SK-N-SH (cell line): ENCODE measurements at regions of chr16 and their contacts with region 1.

Region 1: DNA sequence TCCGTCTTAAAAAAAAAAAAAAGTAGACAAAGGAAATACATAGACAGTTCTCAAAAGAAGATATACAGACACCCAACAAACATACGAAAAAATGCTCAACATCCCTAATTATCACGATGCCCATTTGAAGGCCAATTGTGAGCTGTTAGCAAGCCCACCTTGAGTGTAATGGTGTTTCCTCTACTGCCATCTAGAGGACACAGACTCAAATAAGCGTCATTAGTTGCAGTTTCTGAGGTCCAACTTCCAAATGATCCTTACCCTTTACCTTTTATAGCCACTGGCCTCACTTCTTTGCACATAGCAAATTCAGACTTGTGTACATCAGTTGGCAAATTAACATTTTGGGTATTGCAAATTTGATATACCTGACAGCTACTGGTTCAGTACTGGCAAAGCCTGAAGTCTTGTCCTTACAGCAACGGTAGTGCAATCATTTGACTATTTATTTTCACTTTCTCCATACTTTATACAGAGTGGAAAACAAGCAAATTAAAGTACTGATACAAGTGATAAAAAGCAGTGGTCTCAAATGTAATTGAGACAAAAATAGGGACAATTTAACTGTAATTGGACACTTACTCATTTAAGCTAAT is 536.3 kb upstream of the EEF2KMT start:
- DNase-seq: peak; percentile 54
- H3K4me3 ChIP-seq: no peak overlapping the region
- H3K27ac ChIP-seq: peak overlapping the region in 1 of 2 experiments; percentile 9; a peak in 1 of 4 replicates
- H3K4me1 ChIP-seq: peaks cover 0 to 7% of the 10 kb centered on the region in 2 experiments; a peak in 2 of 4 replicates
- H3K27me3 ChIP-seq: no peaks in the 10 kb centered on the region
- CTCF ChIP-seq: peak; percentile 49
- EP300 ChIP-seq: no peak
- RAD21 ChIP-seq: peak; percentile 70

Region 2: GRCh38 chr16:5502467-5502869 is 131.5 kb before region 1 on chr16:
- CTCF ChIA-PET with region 1: interaction called, 20 read pairs
- POLR2A ChIA-PET with region 1: interaction called, 4 read pairs
- DNase-seq: peak; percentile 76
- H3K4me3 ChIP-seq: no peak overlapping the region
- H3K27ac ChIP-seq: peak overlapping the region in 1 of 2 experiments; percentile 100; a peak in 2 of 4 replicates
- H3K4me1 ChIP-seq: peaks cover 0 to 62% of the 10 kb centered on the region in 2 experiments; a peak in 2 of 4 replicates
- H3K27me3 ChIP-seq: no peaks in the 10 kb centered on the region
- CTCF ChIP-seq: 0 out of 2 replicates have a peak, but pooled peaks have one; percentile 8
- EP300 ChIP-seq: peak in 1 of 2 experiments; percentile 100; a peak in 2 of 4 replicates
- RAD21 ChIP-seq: peak; percentile 95

Region 3: DNA sequence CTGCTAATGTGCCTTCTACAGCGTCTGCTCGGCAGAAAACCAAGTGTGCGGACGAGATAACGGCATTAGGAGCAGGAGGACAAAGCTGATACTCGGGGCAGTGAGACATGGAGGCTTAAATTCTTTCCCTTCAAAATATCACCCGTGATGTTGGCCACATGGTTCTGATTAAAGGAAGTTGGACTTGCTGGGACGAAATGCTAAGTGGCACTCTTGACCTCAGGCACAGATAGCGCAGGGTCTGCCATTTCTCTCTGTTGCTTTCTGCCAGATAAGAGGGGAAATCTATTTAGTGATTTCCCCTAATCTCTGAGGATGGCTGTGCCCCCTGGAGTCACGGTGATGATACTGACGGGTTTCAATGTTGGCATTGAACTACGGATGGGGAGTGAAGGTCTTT is 26.8 kb before region 1 on chr16:
- CTCF ChIA-PET with region 1: interaction called, 20 read pairs
- POLR2A ChIA-PET with region 1: no interaction called
- DNase-seq: peak; percentile 68
- H3K4me3 ChIP-seq: no peak overlapping the region
- H3K27ac ChIP-seq: peak overlapping the region in 1 of 2 experiments; percentile 99; a peak in 3 of 4 replicates
- H3K4me1 ChIP-seq: peaks cover 0 to 56% of the 10 kb centered on the region in 2 experiments; a peak in 2 of 4 replicates
- H3K27me3 ChIP-seq: no peaks in the 10 kb centered on the region
- CTCF ChIP-seq: no peak
- EP300 ChIP-seq: peak in 1 of 2 experiments; percentile 98; a peak in 2 of 4 replicates
- RAD21 ChIP-seq: peak; percentile 54

Region 4: DNA sequence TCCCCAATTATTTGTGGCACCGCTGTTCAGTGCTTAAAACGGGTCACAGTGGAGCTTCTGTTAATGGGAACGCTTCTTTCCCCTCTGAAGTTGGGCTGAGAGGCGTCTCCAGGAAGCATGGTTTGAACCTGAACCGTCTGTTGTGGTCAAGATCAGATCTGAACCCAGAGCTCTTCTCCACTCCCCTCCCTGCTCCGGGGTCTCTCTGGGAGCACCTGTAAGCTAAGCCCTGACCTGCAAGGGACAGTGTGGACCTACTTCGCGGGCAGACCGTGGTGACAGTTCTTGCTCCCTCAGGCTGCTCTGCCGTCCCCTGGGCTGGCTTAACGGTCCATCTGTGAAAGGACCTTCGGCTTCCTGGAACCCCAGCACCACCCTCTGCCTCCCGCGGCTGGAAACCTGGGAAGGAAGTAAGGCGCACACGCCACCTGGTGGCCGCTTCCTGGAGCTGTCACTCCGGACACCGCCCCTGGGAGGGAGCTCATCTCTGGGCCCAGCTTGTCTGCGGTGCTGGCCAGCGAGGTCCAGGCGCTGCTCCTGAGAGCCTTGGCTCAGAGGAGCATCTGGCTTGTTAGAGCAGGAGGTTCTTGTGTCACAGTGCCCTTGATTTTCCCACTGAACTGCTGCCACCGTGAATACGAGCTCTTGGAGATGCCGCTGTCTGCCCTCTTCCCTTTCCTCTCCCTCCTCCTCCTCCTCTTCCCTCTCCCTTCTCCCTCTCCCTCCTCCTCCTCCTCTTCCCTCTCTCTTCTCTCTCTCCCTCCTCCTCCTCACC is 17.9 kb before region 1 on chr16:
- CTCF ChIA-PET with region 1: interaction called, 128 read pairs
- POLR2A ChIA-PET with region 1: interaction called, 4 read pairs
- DNase-seq: peak; percentile 84
- H3K4me3 ChIP-seq: peak overlapping the region in 1 of 2 experiments; percentile 47; a peak in 2 of 4 replicates
- H3K27ac ChIP-seq: peak overlapping the region in 1 of 2 experiments; percentile 96; a peak in 2 of 4 replicates
- H3K4me1 ChIP-seq: peaks cover 0 to 53% of the 10 kb centered on the region in 2 experiments; a peak in 2 of 4 replicates
- H3K27me3 ChIP-seq: no peaks in the 10 kb centered on the region
- CTCF ChIP-seq: peak; percentile 41
- EP300 ChIP-seq: peak in 1 of 2 experiments; percentile 41; a peak in 1 of 4 replicates
- RAD21 ChIP-seq: peak; percentile 76

Region 5: GRCh38 chr16:5621826-5622225 is 12.1 kb before region 1 on chr16:
- CTCF ChIA-PET with region 1: interaction called, 128 read pairs
- POLR2A ChIA-PET with region 1: interaction called, 4 read pairs
- DNase-seq: peak; percentile 52
- H3K4me3 ChIP-seq: no peak overlapping the region
- H3K27ac ChIP-seq: peak overlapping the region in 1 of 2 experiments; percentile 94; a peak in 2 of 4 replicates
- H3K4me1 ChIP-seq: peaks cover 0 to 63% of the 10 kb centered on the region in 2 experiments; a peak in 2 of 4 replicates
- H3K27me3 ChIP-seq: no peaks in the 10 kb centered on the region
- CTCF ChIP-seq: no peak
- EP300 ChIP-seq: peak in 1 of 2 experiments; percentile 82; a peak in 2 of 4 replicates
- RAD21 ChIP-seq: no peak

Region 6: DNA sequence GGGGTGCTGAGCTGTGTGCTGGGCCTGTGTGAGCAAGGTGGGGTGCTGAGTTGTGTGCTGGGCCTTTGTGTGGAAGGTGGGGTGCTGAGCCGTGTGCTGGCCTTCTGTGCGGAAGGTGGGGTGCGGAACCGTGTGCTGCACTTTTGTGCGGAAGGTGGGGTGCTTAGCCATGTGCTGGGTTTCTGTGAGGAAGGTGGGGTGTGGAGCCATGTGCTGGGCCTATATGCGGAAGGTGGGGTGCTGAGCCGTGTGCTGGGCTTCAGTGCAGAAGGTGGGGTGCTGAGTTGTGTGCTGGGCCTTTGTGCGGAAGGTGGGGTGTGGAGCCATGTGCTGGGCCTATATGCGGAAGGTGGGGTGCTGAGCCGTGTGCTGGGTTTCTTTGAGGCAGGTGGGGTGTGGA is 19.1 kb after region 1 on chr16:
- CTCF ChIA-PET with region 1: interaction called, 15 read pairs
- POLR2A ChIA-PET with region 1: no interaction called
- DNase-seq: no peak
- H3K4me3 ChIP-seq: no peak overlapping the region
- H3K27ac ChIP-seq: no peak overlapping the region
- H3K4me1 ChIP-seq: peaks cover 0 to 6% of the 10 kb centered on the region in 2 experiments; a peak in 1 of 4 replicates
- H3K27me3 ChIP-seq: no peaks in the 10 kb centered on the region
- CTCF ChIP-seq: no peak
- EP300 ChIP-seq: no peak
- RAD21 ChIP-seq: no peak